Endothelial cell of umbilical vein (primary cell): ENCODE measurements at regions of chr7 and their contacts with region 1.

Region 1: DNA sequence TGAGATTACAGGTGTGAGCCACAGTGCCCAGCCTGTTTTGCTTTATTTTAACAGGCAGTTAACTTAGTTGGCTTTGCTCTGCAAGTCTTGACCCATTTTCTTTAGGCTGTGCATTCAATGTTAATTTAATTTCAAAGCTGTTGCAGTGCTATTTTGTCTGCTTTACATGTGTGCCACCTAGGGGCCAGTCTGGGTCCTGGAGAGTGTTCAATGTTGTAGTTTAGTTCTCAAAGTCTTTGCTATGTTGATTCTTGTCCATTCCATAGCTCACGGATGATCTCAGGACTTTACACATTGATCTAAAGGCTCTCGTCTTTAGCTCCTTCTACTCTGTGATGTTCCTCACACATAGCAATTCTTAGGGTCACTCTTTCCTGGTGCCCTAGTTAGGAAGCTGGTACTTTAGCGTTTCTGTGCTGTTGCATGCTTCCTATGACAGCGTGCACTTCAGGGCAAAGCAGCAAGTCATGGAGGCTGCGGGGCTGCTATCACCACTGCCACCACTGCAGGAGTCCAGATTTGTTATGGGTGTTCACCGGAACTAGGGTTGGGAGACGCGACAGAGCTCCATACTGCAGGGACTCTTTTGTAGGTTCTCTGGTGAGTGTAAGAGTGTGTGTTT is 16.4 kb upstream of the ABCA13 start:
- DNase-seq: peak; percentile 55
- H3K4me3 ChIP-seq: no peak overlapping the region
- H3K27ac ChIP-seq: no peak overlapping the region
- H3K4me1 ChIP-seq: no peaks in the 10 kb centered on the region
- H3K27me3 ChIP-seq: peaks cover 7 to 13% of the 10 kb centered on the region in 2 experiments
- CTCF ChIP-seq: peak; percentile 53 to 66
- POLR2A ChIP-seq: no peak

Region 2: GRCh38 chr7:47792521-47793121 is 362.3 kb before region 1 on chr7:
- CTCF ChIA-PET with region 1: interaction called, 3 read pairs
- POLR2A ChIA-PET with region 1: no interaction called
- dilution Hi-C with region 1: no loop called
- intact Hi-C with region 1: loop called (anchors 10 kb)
- DNase-seq: peak; percentile 69
- H3K4me3 ChIP-seq: no peak overlapping the region
- H3K27ac ChIP-seq: no peak overlapping the region
- H3K4me1 ChIP-seq: peaks cover 2% of the 10 kb centered on the region
- H3K27me3 ChIP-seq: no peaks in the 10 kb centered on the region
- CTCF ChIP-seq: peak; percentile 52 to 57
- POLR2A ChIP-seq: no peak

Region 3: GRCh38 chr7:48140001-48140681 is 14.8 kb before region 1 on chr7:
- CTCF ChIA-PET with region 1: interaction called, 13 read pairs
- POLR2A ChIA-PET with region 1: no interaction called
- dilution Hi-C with region 1: no loop called
- intact Hi-C with region 1: no loop called
- DNase-seq: peak; percentile 57
- H3K4me3 ChIP-seq: no peak overlapping the region
- H3K27ac ChIP-seq: no peak overlapping the region
- H3K4me1 ChIP-seq: peaks cover 4% of the 10 kb centered on the region
- H3K27me3 ChIP-seq: no peaks in the 10 kb centered on the region
- CTCF ChIP-seq: no peak
- POLR2A ChIP-seq: no peak